Activated CD8-positive, alpha-beta T cell treated with anti-CD3 and anti-CD28 coated beads, Interleukin-2, amount 10 ng/mL, durations not matched to agents 7 days and 5 days (primary cell): ENCODE measurements at regions of chr11 and their contacts with region 1.

Region 1: GRCh38 chr11:65418711-65419459 is 3.7 kb upstream of the NEAT1 start:
- DNase-seq: peak; percentile 95
- ATAC-seq: peak; percentile 29
- H3K4me3 Mint-ChIP-seq: peak overlapping the region; percentile 87
- H3K27ac Mint-ChIP-seq: peak overlapping the region; percentile 100
- H3K4me1 Mint-ChIP-seq: peaks cover 60% of the 10 kb centered on the region
- H3K27me3 Mint-ChIP-seq: peaks cover 2% of the 10 kb centered on the region

Region 2: GRCh38 chr11:65382033-65382807 is 36.7 kb before region 1 on chr11 and contains the start of gene SLC25A45:
- CTCF ChIA-PET with region 1: interaction called, 46 read pairs
- POLR2A ChIA-PET with region 1: interaction called, 253 read pairs
- DNase-seq: peak; percentile 92
- ATAC-seq: peak; percentile 87
- H3K4me3 Mint-ChIP-seq: peak within 1 kb of the TSS; percentile 83
- H3K27ac Mint-ChIP-seq: peak within 1 kb of the TSS; percentile 99
- H3K4me1 Mint-ChIP-seq: peaks cover 47% of the 10 kb centered on the region
- H3K27me3 Mint-ChIP-seq: no peaks in the 10 kb centered on the region
- total RNA-seq, gene SLC25A45: 24.5 to 28.2 TPM

Region 3: DNA sequence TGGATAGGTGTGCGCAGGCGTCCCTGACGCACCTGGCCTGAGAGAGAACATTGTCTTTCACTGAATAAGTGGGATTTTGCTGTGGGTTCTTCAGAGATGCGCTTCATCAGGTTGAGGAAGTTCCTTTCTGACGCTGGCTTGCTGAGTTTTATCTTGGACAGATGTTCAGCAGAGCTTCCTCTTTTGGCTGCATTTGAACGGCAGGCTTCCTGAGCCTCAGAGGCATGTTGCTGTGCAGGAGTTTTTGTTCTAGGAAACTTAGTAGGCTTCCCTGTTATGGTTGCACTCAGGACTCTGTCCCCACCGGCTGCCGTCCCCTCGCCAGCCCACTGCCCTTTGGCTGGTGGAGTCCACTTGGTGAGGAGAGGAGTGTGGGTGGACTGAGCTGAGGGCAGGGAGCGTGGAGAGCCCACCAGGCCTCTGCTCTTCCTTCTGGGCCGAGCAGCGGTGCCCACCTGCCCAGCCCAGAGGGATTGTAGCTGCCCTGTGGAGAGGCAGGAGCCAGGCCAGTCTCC is 15.2 kb before region 1 on chr11:
- CTCF ChIA-PET with region 1: interaction called, 35 read pairs
- POLR2A ChIA-PET with region 1: interaction called, 6 read pairs
- DNase-seq: no peak
- ATAC-seq: no peak
- H3K4me3 Mint-ChIP-seq: no peak overlapping the region
- H3K27ac Mint-ChIP-seq: peak overlapping the region; percentile 42
- H3K4me1 Mint-ChIP-seq: peaks cover 4% of the 10 kb centered on the region
- H3K27me3 Mint-ChIP-seq: no peaks in the 10 kb centered on the region

Region 4: GRCh38 chr11:65432686-65433582 is 14.0 kb after region 1 on chr11:
- CTCF ChIA-PET with region 1: interaction called, 29 read pairs
- POLR2A ChIA-PET with region 1: interaction called, 112 read pairs
- DNase-seq: no peak
- ATAC-seq: no peak
- H3K4me3 Mint-ChIP-seq: no peak overlapping the region
- H3K27ac Mint-ChIP-seq: peak overlapping the region; percentile 50
- H3K4me1 Mint-ChIP-seq: peaks cover 82% of the 10 kb centered on the region
- H3K27me3 Mint-ChIP-seq: no peaks in the 10 kb centered on the region

Region 5: GRCh38 chr11:65440831-65441499 is 22.1 kb after region 1 on chr11:
- CTCF ChIA-PET with region 1: interaction called, 17 read pairs
- POLR2A ChIA-PET with region 1: interaction called, 16 read pairs
- DNase-seq: no peak
- ATAC-seq: peak; percentile 10
- H3K4me3 Mint-ChIP-seq: peak overlapping the region; percentile 45
- H3K27ac Mint-ChIP-seq: peak overlapping the region; percentile 86
- H3K4me1 Mint-ChIP-seq: peaks cover 60% of the 10 kb centered on the region
- H3K27me3 Mint-ChIP-seq: no peaks in the 10 kb centered on the region

Region 6: GRCh38 chr11:65471410-65471762 is 52.5 kb after region 1 on chr11:
- CTCF ChIA-PET with region 1: interaction called, 99 read pairs
- POLR2A ChIA-PET with region 1: interaction called, 302 read pairs
- DNase-seq: no peak
- ATAC-seq: no peak
- H3K4me3 Mint-ChIP-seq: peak overlapping the region; percentile 12
- H3K27ac Mint-ChIP-seq: peak overlapping the region; percentile 94
- H3K4me1 Mint-ChIP-seq: peaks cover 31% of the 10 kb centered on the region
- H3K27me3 Mint-ChIP-seq: no peaks in the 10 kb centered on the region

Region 7: GRCh38 chr11:65477149-65477965 is 58.5 kb after region 1 on chr11:
- CTCF ChIA-PET with region 1: interaction called, 99 read pairs
- POLR2A ChIA-PET with region 1: interaction called, 302 read pairs
- DNase-seq: peak; percentile 90
- ATAC-seq: peak; percentile 84
- H3K4me3 Mint-ChIP-seq: peak overlapping the region; percentile 98
- H3K27ac Mint-ChIP-seq: peak overlapping the region; percentile 100
- H3K4me1 Mint-ChIP-seq: peaks cover 16% of the 10 kb centered on the region
- H3K27me3 Mint-ChIP-seq: peaks cover 4% of the 10 kb centered on the region